ENCODE measurements at regions of chr17 and their contacts with region 1.

Region 1: GRCh38 chr17:76501018-76501826 is at the start of gene RHBDF2:
- DNase-seq: peak; percentile 95
- H3K4me3 Mint-ChIP-seq: peak within 1 kb of the TSS; percentile 92
- H3K27ac Mint-ChIP-seq: peak within 1 kb of the TSS; percentile 89
- H3K4me1 Mint-ChIP-seq: peaks cover 58% of the 10 kb centered on the region
- H3K27me3 Mint-ChIP-seq: no peaks in the 10 kb centered on the region
- total RNA-seq, gene RHBDF2: 53.2 and 53.7 TPM in 2 replicates

Region 2: DNA sequence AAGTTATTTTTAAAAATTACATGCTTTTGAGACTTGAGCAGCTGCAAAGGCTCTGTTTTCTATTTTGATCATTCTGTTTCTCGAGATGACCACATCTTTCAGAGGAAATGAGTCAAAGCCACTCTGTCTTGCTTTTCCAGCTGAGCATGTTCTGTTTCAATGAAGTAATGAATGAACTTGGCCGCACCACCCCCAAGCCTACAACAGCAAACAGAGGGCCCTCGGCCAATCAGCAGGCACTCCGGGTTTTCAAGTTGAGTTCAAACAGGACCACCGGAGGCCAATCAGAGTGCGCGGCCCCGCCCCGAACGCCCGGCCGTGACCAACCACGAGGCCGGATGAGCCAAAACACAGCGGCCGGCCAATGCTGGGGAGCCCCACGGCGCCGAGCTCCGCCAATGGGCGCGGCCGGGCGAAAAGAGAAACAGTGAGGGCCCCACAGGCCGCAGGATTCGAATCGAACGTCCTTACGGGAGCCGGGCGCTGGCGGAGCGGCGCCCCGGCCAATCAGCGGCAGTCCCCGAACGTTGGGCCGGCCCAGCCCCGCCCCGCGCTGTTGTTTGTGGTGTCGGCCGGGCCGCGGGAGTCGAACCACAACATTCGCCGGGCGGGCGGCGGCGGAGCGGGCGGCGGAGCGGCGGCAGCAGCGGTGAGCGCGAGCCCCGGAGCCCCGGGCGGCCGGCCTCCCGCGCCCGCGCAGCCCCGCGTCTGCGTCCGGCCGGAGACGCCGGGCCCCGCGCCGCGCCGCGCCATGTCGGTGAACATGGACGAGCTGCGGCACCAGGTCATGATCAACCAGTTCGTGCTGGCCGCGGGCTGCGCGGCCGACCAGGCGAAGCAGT is 236.2 kb before region 1 on chr17 and contains the start of gene UBALD2:
- intact Hi-C with region 1: loop called (anchors 10 kb)
- DNase-seq: peak; percentile 99
- H3K4me3 Mint-ChIP-seq: peak within 1 kb of the TSS; percentile 94
- H3K27ac Mint-ChIP-seq: peak within 1 kb of the TSS; percentile 94
- H3K4me1 Mint-ChIP-seq: peaks cover 63% of the 10 kb centered on the region
- H3K27me3 Mint-ChIP-seq: no peaks in the 10 kb centered on the region
- total RNA-seq, gene UBALD2: 206 and 217 TPM in 2 replicates

Region 3: DNA sequence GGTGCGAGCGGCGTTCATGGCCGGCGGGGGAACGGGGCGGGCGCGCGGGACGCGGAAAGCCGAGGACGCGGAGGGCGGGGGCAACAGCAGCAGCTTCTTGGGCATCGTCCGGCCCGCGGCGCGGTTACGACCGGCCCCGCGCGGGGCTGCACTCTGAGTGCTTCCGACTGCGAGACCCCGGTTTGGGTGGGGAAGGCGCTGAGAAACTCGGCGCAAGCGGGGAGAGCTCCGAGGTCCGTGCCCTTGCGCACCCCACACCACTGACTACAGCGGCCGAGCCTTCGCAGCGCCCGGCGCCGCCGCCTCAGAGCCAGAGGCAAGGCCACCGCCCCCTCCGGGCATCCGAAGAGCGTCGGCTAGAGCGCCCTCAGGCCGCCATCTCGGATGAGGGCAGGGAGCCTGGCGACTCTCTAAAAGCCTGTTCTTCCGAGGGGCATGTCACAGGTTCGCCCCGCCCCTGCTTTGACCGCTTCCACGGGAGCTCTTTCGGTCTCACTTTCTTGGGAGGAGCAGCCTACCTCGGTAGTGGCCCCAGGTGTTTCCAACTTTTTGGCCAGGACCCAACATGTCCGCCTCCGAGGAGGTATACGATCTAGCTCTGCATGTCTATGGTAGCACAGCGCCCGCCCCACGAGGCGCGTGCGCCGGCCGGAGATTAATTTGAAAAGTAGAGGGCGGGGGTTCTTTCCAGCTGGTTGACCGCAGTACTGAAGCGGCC is 147.5 kb before region 1 on chr17 and contains the start of gene PRPSAP1:
- intact Hi-C with region 1: loop called (anchors 10 kb)
- DNase-seq: peak; percentile 82
- H3K4me3 Mint-ChIP-seq: peak within 1 kb of the TSS; percentile 93
- H3K27ac Mint-ChIP-seq: peak within 1 kb of the TSS; percentile 99
- H3K4me1 Mint-ChIP-seq: peaks cover 28% of the 10 kb centered on the region
- H3K27me3 Mint-ChIP-seq: peaks cover 3% of the 10 kb centered on the region
- total RNA-seq, gene PRPSAP1: 41.2 and 44.0 TPM in 2 replicates

Region 4: DNA sequence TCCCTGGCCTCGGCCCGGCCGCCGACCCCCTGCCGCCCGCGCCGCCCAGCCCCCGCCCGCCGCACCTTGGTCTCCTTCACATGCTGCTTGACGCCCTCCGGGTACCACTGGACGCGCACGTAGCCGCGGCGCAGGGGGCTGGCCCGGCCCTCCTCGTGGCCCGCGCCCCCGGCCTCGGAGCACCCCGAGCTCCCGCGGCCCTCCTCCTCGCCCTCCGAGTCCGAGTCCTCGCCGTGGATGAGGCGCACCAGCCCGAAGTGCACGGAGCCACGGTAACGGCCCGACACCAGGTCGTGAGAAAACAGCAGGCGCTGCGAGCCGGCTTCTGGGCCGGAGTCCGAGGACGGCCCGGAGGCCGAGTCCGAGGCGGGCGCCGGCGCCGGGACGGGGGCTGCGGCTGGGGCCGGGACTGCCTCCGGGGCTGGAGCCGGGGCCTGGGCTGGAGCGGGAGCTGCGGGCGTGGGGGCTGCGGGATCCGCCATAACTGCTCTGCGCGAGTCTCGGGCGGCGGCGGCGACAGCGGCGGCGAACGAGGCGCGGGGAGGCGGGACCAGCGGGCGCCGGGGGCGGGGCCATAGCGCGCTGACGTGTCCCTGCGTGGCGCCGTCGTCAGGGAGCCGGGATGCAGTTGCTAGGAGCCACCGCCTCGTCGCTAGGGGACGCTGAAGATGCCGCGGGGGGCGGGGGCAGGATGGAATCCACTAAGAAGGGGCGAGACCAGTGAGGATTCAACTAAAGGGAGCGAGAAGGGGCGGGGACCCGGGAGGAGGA is 48.4 kb before region 1 on chr17 and contains the start of gene UBE2O:
- intact Hi-C with region 1: loop called (anchors 1 kb)
- DNase-seq: peak; percentile 93
- H3K4me3 Mint-ChIP-seq: peak within 1 kb of the TSS; percentile 91
- H3K27ac Mint-ChIP-seq: peak within 1 kb of the TSS; percentile 87
- H3K4me1 Mint-ChIP-seq: peaks cover 42% of the 10 kb centered on the region
- H3K27me3 Mint-ChIP-seq: peaks cover 10% of the 10 kb centered on the region
- total RNA-seq, gene UBE2O: 44.9 and 45.1 TPM in 2 replicates

Region 5: DNA sequence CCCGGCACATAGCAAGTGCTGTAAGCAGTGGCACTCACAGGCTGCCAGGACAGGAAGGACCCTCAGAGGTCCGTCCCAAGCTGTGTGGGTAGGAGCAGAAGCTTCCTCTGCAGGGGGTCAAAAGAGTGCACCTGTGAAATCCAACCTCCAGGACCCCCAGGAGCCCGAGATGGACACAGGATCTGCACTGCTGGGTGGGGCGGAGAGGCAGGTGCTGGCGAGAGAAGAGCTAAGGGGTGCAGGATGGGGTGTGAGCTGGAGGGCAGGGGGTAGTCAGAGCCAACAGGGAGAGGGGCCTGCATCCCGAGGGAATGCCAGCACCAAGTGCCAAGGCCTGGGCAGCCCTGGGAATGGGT is 34.5 kb before region 1 on chr17:
- intact Hi-C with region 1: loop called (anchors 1 kb)
- DNase-seq: no peak
- H3K4me3 Mint-ChIP-seq: no peak overlapping the region
- H3K27ac Mint-ChIP-seq: no peak overlapping the region
- H3K4me1 Mint-ChIP-seq: peaks cover 9% of the 10 kb centered on the region
- H3K27me3 Mint-ChIP-seq: peaks cover under 1% of the 10 kb centered on the region

Region 6: DNA sequence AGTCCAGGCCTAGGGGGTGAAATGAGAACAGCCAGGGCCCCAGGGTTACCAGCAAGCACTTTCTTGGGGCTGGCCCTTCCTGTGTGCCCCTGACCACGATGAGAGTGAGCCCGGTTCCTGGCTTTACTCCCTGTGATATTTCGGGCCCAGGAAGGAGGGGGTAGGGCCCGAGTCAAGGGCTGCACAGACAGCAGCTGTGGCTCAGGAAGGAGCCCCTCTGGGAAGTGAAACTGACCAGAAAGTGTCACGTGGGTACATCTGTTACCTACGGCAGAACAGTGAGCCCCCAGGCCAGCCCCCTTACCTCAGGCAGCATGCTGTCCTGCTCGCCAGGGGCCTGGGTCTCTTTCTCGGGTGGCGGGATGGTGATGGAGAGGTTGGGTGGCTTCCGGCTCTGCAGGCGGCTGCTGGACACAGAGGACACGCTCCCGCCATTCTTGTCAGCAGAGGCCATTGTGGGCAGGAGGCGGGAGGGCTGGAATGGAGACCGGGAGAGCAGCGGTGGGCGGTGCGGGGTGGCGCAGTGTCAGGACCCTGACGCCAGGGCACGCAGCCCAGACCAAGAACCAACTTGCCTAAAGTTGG is 20.1 kb before region 1 on chr17:
- intact Hi-C with region 1: no loop called
- DNase-seq: no peak
- H3K4me3 Mint-ChIP-seq: no peak overlapping the region
- H3K27ac Mint-ChIP-seq: no peak overlapping the region
- H3K4me1 Mint-ChIP-seq: peaks cover 11% of the 10 kb centered on the region
- H3K27me3 Mint-ChIP-seq: no peaks in the 10 kb centered on the region

Region 7: DNA sequence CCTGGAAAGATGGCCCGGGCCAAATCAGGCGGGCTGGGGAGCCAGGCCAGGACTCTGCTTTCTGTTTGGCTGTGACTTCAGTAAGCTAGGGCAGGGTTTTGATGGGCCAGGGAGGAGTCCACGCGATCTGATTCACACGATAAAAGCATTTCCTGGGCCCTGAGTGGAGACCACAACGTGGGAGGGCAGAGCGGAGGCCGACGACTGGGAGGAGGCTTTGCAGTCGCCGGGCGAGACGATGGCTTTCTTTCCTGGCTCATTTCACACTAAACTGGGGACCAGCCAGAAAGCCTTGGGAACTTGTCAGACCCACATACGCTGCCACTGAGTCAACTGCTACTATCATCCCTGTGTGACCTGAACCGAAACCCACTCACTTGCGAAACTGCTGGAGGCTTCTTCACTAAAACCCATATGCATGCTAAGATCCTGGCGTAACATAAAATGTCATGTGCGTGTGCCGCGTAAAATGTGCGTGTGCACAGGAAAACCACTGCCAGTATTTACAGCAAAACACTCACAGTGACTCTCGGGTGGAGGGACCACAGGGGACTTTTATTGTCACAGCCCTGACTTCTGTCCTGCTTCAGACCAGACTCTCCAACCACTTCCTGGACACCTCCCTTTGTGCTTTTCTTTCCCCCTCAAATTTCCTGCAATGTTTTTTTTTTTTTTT is 14.2 kb after region 1 on chr17:
- intact Hi-C with region 1: loop called (anchors 1 kb)
- DNase-seq: peak; percentile 86
- H3K4me3 Mint-ChIP-seq: peak overlapping the region; percentile 72
- H3K27ac Mint-ChIP-seq: peak overlapping the region; percentile 92
- H3K4me1 Mint-ChIP-seq: peaks cover 59% of the 10 kb centered on the region
- H3K27me3 Mint-ChIP-seq: peaks cover 5% of the 10 kb centered on the region

Region 8: DNA sequence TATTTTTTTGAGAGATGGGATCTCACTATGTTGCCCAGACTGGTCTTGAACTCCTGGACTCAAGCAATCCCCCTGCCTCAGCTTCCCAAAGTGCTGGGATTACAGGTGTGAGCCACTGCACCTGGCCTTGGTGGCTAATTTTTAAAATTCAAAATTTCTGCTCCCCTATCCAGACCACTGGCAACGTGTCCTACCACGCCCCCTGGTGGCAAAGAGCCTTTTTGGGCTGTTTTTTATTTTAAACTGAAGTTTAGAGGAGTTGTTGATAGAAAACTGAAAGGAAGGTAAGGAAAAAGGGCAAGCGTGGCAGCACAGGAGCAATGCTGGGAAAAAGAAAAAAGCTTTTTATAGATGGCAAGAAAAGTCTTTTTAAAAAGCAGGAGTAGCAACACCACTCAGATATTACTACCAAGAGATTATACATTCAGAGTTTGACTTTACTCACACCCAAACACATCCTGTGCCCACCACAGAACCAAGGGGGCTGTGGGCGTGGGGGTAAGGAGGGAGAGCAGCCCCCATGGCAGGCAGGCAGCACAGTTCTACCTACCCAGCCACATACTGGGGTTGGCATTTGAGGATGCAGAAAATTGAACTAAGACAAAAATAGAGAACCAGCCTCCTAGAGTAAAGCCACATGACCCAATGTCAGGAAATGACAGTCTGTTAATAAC is 213.7 kb after region 1 on chr17:
- intact Hi-C with region 1: loop called (anchors 1 kb)
- DNase-seq: peak; percentile 62
- H3K4me3 Mint-ChIP-seq: no peak overlapping the region
- H3K27ac Mint-ChIP-seq: peak overlapping the region; percentile 16
- H3K4me1 Mint-ChIP-seq: peaks cover 34% of the 10 kb centered on the region
- H3K27me3 Mint-ChIP-seq: no peaks in the 10 kb centered on the region

Measured in activated T-helper 1 cell treated with anti-CD3 and anti-CD28 coated beads, Interleukin-12 subunit alpha, Interleukin-12 subunit beta, Interleukin-2, Interleukin-4 antibody, amounts not matched to agents 30 ng/mL and 10 ng/mL and 1 ng/mL, durations not matched to agents 14 hours and 24 hours and 36 hours (primary cell).